Activated CD8-positive, alpha-beta T cell treated with anti-CD3 and anti-CD28 coated beads for 36 hours (primary cell): ENCODE measurements at regions of chr11 and their contacts with region 1.

Region 1: DNA sequence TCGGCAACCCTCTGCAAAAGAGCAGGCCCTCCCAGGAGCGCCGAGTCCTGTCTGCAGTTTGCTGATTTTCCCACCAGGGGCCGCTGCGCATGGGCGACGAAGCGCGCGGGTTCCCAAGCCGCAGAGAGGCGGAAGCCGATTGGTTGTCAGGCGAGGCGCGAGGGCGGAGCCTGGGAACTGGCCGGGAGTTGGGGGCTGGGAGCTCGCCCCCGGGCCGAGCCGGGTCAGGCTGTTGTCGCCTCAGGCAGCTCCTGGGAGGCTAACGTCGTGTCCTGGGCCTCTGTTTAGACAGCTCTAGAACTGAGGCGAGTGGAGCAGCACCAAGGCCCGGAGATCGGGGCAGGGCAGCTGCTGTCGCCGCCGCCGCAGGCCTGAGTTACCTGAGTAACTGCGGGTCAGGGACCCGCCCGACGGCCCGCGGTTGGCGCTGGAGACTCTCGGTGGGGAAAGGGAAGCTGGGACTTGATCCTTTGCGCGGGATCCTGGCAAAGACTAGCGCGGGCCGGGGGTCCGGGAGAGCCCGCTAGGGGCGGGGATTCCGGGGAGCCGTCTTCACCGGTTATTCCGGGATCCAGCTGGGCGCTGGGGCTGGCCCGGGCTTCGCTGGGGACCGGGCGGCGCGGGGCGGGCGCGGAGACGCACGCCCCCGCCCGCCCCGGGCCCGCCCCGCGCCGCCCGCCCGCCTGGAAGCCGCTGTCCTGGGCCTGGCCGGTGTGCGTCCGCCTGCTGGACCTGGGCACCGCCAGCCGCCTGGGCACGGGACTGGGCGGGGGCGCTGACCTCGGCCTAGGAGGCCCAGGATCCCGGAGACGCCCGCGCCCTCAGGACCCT is at the start of gene STIM1:
- DNase-seq: peak; percentile 98
- ATAC-seq: peak; percentile 79
- H3K4me3 Mint-ChIP-seq: peak within 1 kb of the TSS; percentile 87
- H3K27ac Mint-ChIP-seq: peak within 1 kb of the TSS; percentile 98
- H3K4me1 Mint-ChIP-seq: peaks cover 60% of the 10 kb centered on the region
- H3K27me3 Mint-ChIP-seq: no peaks in the 10 kb centered on the region
- CTCF ChIP-seq: peak; percentile 89
- total RNA-seq, gene STIM1: 60.8 to 61.4 TPM

Region 2: DNA sequence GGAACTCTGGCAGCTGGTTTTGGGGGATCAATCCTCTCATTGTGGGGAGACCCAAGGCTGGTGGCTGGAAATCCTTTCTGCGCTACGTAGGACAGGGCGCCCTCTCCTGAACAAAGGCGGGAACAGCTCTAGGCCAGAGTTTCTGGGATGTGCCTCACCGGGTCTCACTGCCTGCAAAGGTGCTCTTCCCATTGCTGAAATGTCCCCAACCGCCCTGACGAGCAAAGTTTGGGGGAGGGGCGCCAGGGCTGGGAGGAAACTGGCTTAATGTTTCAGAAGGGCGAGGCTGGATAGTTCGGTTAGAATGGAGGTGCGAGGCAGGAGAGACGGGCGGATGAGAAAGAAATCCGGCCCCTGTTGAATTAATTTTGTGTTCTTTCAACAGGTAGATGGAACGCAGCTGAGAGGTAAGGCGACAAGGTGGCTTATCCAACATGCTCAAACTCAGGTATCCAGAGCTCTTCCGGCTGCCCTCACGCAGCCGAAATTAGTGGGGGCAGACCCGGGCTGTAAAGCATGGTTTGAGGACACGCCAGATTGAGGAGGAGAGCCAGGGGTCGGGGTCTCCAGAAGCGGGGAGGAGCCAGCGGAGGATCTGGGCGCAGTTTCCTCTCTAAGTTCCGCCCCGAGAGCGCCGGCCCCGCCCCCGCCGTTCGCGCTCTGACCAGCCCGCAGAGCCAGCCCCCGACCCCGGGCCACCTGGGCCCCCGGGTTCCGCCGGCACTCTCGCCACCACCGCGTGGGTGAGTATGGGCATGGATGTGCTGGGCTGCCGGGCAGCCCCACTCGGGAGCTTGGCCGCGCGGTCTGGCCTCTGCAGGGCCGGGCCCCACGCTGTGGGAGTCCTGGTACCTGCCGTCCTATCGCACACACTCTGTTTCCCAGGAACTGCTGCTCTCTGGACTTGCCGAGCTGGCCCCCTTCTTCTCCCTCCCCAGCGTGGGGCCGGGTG is 47.0 kb before region 1 on chr11 and contains the start of gene PGAP2:
- CTCF ChIA-PET with region 1: interaction called, 15 read pairs
- POLR2A ChIA-PET with region 1: no interaction called
- intact Hi-C with region 1: no loop called
- DNase-seq: peak; percentile 70
- ATAC-seq: peak; percentile 80
- H3K4me3 Mint-ChIP-seq: peak within 1 kb of the TSS; percentile 95
- H3K27ac Mint-ChIP-seq: peak within 1 kb of the TSS; percentile 91
- H3K4me1 Mint-ChIP-seq: peaks cover 22% of the 10 kb centered on the region
- H3K27me3 Mint-ChIP-seq: no peaks in the 10 kb centered on the region
- CTCF ChIP-seq: peak; percentile 58
- total RNA-seq, gene PGAP2: 33.1 to 36.7 TPM

Region 3: DNA sequence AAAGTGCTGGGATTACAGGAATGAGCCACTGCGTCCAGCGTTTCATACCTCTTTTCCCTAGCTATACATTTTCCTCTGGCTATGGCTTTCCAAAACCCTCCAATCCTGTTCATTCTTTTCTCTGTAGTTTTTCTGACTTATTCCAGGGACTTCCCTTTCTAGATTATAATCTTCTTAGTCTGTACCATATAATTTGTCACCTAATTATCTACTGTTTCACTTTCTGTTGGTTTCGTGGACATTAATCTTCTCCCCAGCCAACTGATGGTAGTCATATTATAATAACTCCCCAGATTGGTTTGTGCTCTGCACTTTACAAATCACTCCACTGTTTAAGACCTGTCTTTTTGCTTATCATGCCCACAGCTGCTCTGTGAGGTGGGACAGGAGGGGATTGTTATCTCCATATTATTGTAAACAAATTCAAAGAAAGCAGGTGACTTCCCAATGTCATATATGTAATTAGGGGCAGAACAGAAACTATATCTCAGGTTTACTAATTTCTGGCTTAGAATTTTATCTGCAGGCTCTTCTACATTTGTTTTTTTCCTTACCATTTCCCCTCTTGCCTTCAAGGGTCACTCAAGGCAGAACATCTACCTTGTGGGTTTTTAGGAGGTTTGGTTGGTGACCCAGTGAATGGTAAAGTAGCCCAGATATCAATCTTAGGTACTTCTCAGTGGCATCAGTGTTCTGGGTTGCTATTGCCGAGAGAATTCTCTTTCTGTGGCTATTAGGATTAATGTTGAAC is 24.2 kb after region 1 on chr11:
- CTCF ChIA-PET with region 1: interaction called, 274 read pairs
- POLR2A ChIA-PET with region 1: interaction called, 13 read pairs
- intact Hi-C with region 1: no loop called
- DNase-seq: no peak
- ATAC-seq: peak; percentile 62
- H3K4me3 Mint-ChIP-seq: no peak overlapping the region
- H3K27ac Mint-ChIP-seq: peak overlapping the region; percentile 77
- H3K4me1 Mint-ChIP-seq: peaks cover 76% of the 10 kb centered on the region
- H3K27me3 Mint-ChIP-seq: no peaks in the 10 kb centered on the region
- CTCF ChIP-seq: no peak

Region 4: GRCh38 chr11:3905080-3905953 is 50.1 kb after region 1 on chr11:
- CTCF ChIA-PET with region 1: interaction called, 41 read pairs
- POLR2A ChIA-PET with region 1: interaction called, 7 read pairs
- intact Hi-C with region 1: no loop called
- DNase-seq: peak; percentile 83
- ATAC-seq: peak; percentile 97
- H3K4me3 Mint-ChIP-seq: no peak overlapping the region
- H3K27ac Mint-ChIP-seq: peak overlapping the region; percentile 74
- H3K4me1 Mint-ChIP-seq: peaks cover 77% of the 10 kb centered on the region
- H3K27me3 Mint-ChIP-seq: no peaks in the 10 kb centered on the region
- CTCF ChIP-seq: no peak

Region 5: DNA sequence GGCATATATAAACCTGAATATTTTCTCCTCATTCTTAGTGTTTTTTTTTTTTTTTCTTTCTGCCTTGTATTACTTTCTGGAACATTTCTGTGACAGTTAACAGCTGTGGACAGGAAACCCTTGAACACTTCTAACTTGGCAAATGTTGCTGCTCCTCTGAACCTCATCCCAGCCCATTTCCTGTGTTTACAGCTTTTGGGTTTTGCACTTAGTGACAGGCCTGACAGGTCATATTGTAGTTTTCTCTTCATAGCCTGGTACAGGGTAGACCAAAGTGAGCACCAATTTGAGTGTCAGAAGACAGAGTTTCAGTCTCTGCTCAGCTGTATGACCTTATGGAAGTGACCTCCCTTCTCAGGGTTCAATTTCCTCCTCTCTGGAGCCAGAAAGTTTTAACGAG is 91.9 kb after region 1 on chr11:
- CTCF ChIA-PET with region 1: interaction called, 34 read pairs
- POLR2A ChIA-PET with region 1: interaction called, 16 read pairs
- intact Hi-C with region 1: loop called (anchors 5 kb)
- DNase-seq: peak; percentile 70
- ATAC-seq: peak; percentile 75
- H3K4me3 Mint-ChIP-seq: peak overlapping the region; percentile 37
- H3K27ac Mint-ChIP-seq: peak overlapping the region; percentile 93
- H3K4me1 Mint-ChIP-seq: peaks cover 93% of the 10 kb centered on the region
- H3K27me3 Mint-ChIP-seq: no peaks in the 10 kb centered on the region
- CTCF ChIP-seq: no peak

Region 6: GRCh38 chr11:3984896-3985295 is 129.7 kb after region 1 on chr11:
- CTCF ChIA-PET with region 1: interaction called, 50 read pairs
- POLR2A ChIA-PET with region 1: interaction called, 5 read pairs
- intact Hi-C with region 1: loop called (anchors 5 kb)
- DNase-seq: peak; percentile 79
- ATAC-seq: peak; percentile 83
- H3K4me3 Mint-ChIP-seq: no peak overlapping the region
- H3K27ac Mint-ChIP-seq: peak overlapping the region; percentile 77
- H3K4me1 Mint-ChIP-seq: peaks cover 79% of the 10 kb centered on the region
- H3K27me3 Mint-ChIP-seq: no peaks in the 10 kb centered on the region
- CTCF ChIP-seq: peak; percentile 31

Region 7: DNA sequence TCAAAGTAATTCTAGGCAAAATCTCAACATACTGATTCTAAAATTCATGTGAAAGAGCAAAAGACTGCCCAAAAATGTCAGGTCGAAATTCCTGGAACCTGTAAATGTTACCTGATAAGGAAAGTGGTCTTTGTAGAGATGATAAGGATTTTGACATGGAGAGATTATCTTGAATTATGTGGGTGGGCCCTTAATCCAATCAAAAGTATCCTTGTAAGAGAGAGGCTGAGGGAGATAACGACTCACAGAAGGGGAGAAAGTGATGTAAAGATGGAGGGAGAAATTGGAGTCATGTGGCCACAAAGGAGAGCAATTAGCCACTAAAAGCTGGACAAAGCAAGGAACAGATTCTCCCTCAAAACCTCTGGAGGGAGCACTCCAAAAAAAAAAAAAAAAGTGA is 259.9 kb after region 1 on chr11:
- CTCF ChIA-PET with region 1: no interaction called
- POLR2A ChIA-PET with region 1: no interaction called
- intact Hi-C with region 1: no loop called
- DNase-seq: no peak
- ATAC-seq: no peak
- H3K4me3 Mint-ChIP-seq: no peak overlapping the region
- H3K27ac Mint-ChIP-seq: no peak overlapping the region
- H3K4me1 Mint-ChIP-seq: peaks cover 12% of the 10 kb centered on the region
- H3K27me3 Mint-ChIP-seq: no peaks in the 10 kb centered on the region
- CTCF ChIP-seq: no peak